ENCODE measurements at regions of chr1 and their contacts with region 1.

Region 1: DNA sequence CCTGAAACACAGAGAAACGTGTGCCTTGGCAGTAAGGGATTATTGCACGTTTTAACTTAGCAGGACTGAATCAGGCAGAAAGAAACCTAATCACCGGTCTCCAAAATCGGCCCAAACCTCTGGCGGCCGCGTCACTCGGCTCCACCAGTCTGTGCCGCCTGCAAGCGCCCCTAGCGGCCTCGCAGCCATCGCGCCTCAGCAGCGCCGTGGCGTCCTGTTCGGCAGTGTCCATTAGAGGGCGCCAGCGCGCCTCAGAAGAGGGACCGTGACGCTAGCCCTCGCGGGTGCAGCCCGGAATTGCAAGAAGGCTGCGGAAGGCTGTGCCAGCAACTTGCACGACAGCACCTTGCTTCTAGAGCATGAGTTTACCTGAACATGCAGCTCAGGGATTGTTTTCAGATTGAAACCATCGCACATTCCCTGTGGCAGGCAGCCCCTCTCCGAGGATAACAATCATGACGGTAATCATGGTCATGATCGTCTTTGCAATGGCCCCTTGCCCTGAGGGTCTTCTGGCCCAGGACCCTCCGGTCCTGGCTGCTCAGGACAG is 164.4 kb downstream of the TRIM33 start:
- DNase-seq: peak; percentile 95
- ATAC-seq: peak; percentile 100
- H3K4me3 Mint-ChIP-seq: peak overlapping the region; percentile 94
- H3K27ac Mint-ChIP-seq: peak overlapping the region; percentile 56
- H3K4me1 Mint-ChIP-seq: peaks cover 7% of the 10 kb centered on the region
- H3K27me3 Mint-ChIP-seq: peaks cover 7% of the 10 kb centered on the region
- CTCF ChIP-seq: peak; percentile 100

Region 2: DNA sequence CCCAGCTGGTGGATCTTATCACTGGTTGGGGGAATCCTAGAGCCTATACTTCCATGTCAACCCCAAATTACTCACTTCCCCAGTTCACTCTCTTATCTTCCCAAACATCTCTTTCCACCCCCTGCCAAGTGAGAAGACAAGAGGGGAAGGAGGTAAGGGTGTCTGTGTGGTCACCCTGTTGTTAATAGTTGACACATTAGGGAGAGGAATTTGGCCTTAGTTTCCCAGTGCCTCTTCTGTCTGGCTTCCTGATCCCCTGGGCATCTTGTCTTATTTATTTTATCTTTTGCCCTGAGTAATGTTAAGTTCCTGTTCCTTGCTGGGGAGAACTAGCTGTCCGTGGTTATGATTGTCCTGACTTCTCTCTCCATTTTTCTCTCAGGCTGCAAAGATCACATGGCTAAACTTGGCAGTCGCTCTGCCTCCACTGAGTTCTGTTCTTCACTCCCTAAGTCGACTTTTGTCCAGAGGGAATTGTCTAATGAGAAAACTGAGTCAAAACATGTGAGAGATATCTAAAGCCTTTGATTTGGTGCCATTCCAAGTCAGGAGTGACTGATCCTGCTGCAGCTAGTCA is 35.8 kb before region 1 on chr1:
- CTCF ChIA-PET with region 1: no interaction called
- POLR2A ChIA-PET with region 1: no interaction called
- intact Hi-C with region 1: no loop called
- DNase-seq: no peak
- ATAC-seq: no peak
- H3K4me3 Mint-ChIP-seq: no peak overlapping the region
- H3K27ac Mint-ChIP-seq: no peak overlapping the region
- H3K4me1 Mint-ChIP-seq: no peaks in the 10 kb centered on the region
- H3K27me3 Mint-ChIP-seq: peaks cover 9% of the 10 kb centered on the region
- CTCF ChIP-seq: no peak

Region 3: GRCh38 chr1:114388432-114389274 is 42.1 kb after region 1 on chr1:
- CTCF ChIA-PET with region 1: no interaction called
- POLR2A ChIA-PET with region 1: no interaction called
- intact Hi-C with region 1: no loop called
- DNase-seq: no peak
- ATAC-seq: no peak
- H3K4me3 Mint-ChIP-seq: no peak overlapping the region
- H3K27ac Mint-ChIP-seq: no peak overlapping the region
- H3K4me1 Mint-ChIP-seq: no peaks in the 10 kb centered on the region
- H3K27me3 Mint-ChIP-seq: no peaks in the 10 kb centered on the region
- CTCF ChIP-seq: no peak

Region 4: GRCh38 chr1:114428083-114428749 is 81.7 kb after region 1 on chr1:
- CTCF ChIA-PET with region 1: interaction called, 3 read pairs
- POLR2A ChIA-PET with region 1: no interaction called
- intact Hi-C with region 1: loop called (anchors 2 kb)
- DNase-seq: no peak
- ATAC-seq: no peak
- H3K4me3 Mint-ChIP-seq: no peak overlapping the region
- H3K27ac Mint-ChIP-seq: no peak overlapping the region
- H3K4me1 Mint-ChIP-seq: peaks cover 8% of the 10 kb centered on the region
- H3K27me3 Mint-ChIP-seq: no peaks in the 10 kb centered on the region
- CTCF ChIP-seq: no peak

Region 5: DNA sequence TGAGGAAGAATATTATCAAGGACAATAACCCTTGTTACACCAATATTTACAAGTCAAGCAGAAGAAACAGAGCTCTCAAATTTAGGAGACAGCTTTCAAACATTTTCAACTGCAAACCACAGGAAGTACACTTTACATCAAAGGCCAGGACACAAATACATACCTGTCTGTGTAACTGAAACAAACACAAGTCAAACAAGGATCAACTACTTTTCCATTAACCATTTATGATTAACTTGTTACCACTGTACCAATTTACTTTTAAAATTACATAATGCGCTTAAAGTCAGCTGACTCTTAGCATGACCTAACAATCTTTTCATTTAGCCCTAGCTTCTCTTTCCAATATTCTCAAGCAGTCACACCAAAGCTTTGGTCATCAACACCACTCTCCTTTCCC is 120.9 kb after region 1 on chr1:
- CTCF ChIA-PET with region 1: no interaction called
- POLR2A ChIA-PET with region 1: no interaction called
- intact Hi-C with region 1: no loop called
- DNase-seq: no peak
- ATAC-seq: no peak
- H3K4me3 Mint-ChIP-seq: no peak overlapping the region
- H3K27ac Mint-ChIP-seq: no peak overlapping the region
- H3K4me1 Mint-ChIP-seq: peaks cover 40% of the 10 kb centered on the region
- H3K27me3 Mint-ChIP-seq: no peaks in the 10 kb centered on the region
- CTCF ChIP-seq: no peak

Region 6: GRCh38 chr1:114670083-114671010 is 323.8 kb after region 1 on chr1:
- CTCF ChIA-PET with region 1: interaction called, 7 read pairs
- POLR2A ChIA-PET with region 1: no interaction called
- intact Hi-C with region 1: loop called (anchors 1 kb)
- DNase-seq: peak; percentile 80
- ATAC-seq: peak; percentile 99
- H3K4me3 Mint-ChIP-seq: peak overlapping the region; percentile 94
- H3K27ac Mint-ChIP-seq: peak overlapping the region; percentile 67
- H3K4me1 Mint-ChIP-seq: peaks cover 10% of the 10 kb centered on the region
- H3K27me3 Mint-ChIP-seq: peaks cover 30% of the 10 kb centered on the region
- CTCF ChIP-seq: no peak

Region 7: GRCh38 chr1:115052454-115053083 is 706.0 kb after region 1 on chr1:
- CTCF ChIA-PET with region 1: interaction called, 10 read pairs
- POLR2A ChIA-PET with region 1: no interaction called
- intact Hi-C with region 1: loop called (anchors 1 kb)
- DNase-seq: no peak
- ATAC-seq: peak; percentile 75
- H3K4me3 Mint-ChIP-seq: no peak overlapping the region
- H3K27ac Mint-ChIP-seq: no peak overlapping the region
- H3K4me1 Mint-ChIP-seq: no peaks in the 10 kb centered on the region
- H3K27me3 Mint-ChIP-seq: peaks cover 2% of the 10 kb centered on the region
- CTCF ChIP-seq: peak; percentile 93

Measured in activated B cell treated with CpG ODN at 0.5 μM for 24 hours (primary cell).